A673 (cell line): ENCODE measurements at regions of chr12 and their contacts with region 1.

Region 1: DNA sequence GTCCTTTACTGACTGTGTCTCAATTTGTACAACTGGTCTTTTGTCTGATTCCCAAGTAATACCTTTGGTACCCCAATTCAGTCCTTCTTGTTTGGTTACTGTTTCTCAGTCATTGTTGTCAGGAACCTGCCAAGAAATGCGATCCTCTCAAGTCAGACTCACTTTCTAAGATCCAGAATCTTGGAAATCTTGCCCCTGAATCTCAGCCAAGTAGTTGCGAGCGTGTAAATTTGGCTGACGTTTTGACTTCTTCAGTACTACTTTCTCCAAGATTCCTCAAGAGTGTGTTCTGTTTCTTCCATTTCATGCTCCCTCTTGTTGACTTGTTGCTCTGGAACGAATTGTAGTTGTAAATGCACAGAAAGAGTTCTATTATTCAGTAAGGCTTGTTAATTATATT is 114.0 kb downstream of the MSRB3 start:
- DNase-seq: no peak
- H3K4me3 ChIP-seq: no peak overlapping the region
- H3K27ac ChIP-seq: no peak overlapping the region
- H3K4me1 ChIP-seq: peaks cover 4% of the 10 kb centered on the region
- H3K27me3 ChIP-seq: no peaks in the 10 kb centered on the region
- CTCF ChIP-seq: no peak

Region 2: DNA sequence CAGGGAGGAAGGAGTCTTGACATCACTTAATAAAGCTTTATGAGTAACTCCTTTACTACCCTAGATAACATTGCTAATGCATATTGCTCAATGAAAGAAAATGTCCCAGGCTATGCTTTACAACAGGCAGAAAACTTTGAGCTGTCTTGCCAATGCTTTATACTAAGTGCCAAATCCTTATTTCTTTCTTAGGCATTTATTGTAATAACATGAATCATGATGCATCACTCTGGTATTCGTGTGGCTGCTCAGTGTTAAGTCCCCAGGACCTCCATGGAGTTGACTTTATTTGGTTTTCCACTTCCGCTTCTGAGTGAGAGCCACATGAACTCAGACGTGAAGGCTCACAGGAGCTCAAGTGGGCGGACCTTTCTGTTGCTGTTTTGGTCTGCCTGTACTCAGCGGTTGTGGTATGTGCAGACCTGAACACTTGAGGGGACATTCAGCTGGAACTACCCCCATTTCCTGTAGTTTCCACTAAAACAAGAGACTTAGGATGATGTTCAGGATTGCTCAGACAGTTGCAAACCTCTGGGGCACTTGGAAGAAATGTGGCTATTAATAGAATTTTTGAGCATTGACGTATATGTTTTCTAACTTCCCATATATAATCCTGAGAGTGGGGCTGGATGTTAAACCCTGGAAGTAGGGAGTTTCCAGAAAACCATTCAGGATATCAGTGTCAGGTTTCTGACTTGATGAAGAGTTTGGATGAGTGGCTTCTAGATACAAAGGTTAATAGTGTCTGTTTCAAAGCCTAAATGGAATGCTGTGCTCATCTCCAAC is 144.6 kb after region 1 on chr12:
- CTCF ChIA-PET with region 1: no interaction called
- POLR2A ChIA-PET with region 1: interaction called, 17 read pairs
- intact Hi-C with region 1: no loop called
- DNase-seq: peak; percentile 88
- H3K4me3 ChIP-seq: no peak overlapping the region
- H3K27ac ChIP-seq: no peak overlapping the region
- H3K4me1 ChIP-seq: peaks cover 6% of the 10 kb centered on the region
- H3K27me3 ChIP-seq: no peaks in the 10 kb centered on the region
- CTCF ChIP-seq: no peak